Endothelial cell of umbilical vein (primary cell): ENCODE measurements at regions of chr2 and their contacts with region 1.

Region 1: GRCh38 chr2:230712443-230713330 is at the start of gene CAB39:
- DNase-seq: peak; percentile 90
- H3K4me3 ChIP-seq: peak within 1 kb of the TSS; percentile 75 to 94 (median 91)
- H3K27ac ChIP-seq: peak within 1 kb of the TSS; percentile 84
- H3K4me1 ChIP-seq: peaks cover 20% of the 10 kb centered on the region
- H3K27me3 ChIP-seq: peaks cover 0 to 2% of the 10 kb centered on the region in 2 experiments
- CTCF ChIP-seq: peak; percentile 81 to 93
- POLR2A ChIP-seq: peak; percentile 71
- total RNA-seq, gene CAB39: 53.7 and 57.3 TPM in 2 replicates

Region 2: DNA sequence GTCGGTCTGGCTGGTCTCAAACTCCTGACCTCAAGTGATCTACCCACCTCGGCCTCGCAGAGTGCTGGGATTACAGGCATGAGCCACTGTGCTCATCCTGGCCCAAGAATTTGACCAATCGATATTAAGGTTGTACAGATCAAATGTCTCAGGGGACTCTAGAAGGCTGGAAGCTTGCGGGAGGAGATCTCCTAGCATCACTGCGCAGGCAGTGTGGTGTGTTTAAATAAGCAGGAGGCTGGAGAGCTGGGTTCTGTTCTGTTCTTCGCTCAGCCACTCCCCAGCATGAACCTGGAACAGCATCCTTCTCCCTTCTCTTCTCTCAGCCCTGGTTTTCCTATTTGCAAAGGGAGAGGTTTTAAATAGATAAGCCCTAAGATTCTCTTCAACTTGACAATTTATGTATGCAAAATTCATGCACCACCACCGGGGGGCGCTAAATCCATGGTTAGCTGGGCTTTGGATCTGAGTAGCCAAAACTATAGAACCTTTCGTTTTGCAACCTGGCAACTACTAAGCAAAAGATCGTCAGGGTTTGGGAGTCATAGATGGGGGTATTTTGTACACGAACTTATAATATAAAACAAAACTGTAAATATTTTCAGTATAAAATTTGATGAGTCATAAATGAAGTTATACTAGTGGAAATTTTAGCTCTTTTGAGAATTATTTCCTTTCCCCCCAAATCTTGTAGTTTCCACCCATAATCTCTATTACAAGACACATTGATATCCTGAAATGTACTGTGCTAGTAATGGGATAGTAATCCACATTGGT is 704.6 kb before region 1 on chr2:
- CTCF ChIA-PET with region 1: no interaction called
- POLR2A ChIA-PET with region 1: no interaction called
- dilution Hi-C with region 1: no loop called
- intact Hi-C with region 1: loop called (anchors 5 kb)
- DNase-seq: peak; percentile 78
- H3K4me3 ChIP-seq: peak overlapping the region in 1 of 3 experiments; percentile 20
- H3K27ac ChIP-seq: no peak overlapping the region
- H3K4me1 ChIP-seq: peaks cover 7% of the 10 kb centered on the region
- H3K27me3 ChIP-seq: no peaks in the 10 kb centered on the region
- CTCF ChIP-seq: peak; percentile 67 to 78
- POLR2A ChIP-seq: no peak

Region 3: DNA sequence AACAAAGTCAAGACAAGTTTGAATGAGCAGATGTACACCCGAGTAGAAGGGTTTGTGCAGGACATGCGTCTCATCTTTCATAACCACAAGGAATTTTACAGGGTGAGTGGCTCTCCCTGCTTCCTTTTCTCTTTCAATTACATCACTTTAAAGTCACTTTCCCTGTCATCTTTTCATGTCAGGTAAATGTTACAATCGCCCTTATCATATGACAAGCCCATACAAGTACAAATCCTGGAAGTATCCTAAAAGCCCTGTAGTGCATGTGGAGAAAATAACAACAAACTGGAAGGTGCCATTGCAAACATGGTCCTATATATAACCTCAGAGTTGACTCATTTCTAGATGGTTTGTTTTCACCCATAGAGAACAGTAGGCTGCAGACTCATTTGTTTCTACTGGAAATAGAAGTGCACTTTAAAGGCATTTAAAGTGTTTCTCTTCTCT is 170.7 kb before region 1 on chr2:
- CTCF ChIA-PET with region 1: no interaction called
- POLR2A ChIA-PET with region 1: no interaction called
- dilution Hi-C with region 1: no loop called
- intact Hi-C with region 1: no loop called
- DNase-seq: no peak
- H3K4me3 ChIP-seq: no peak overlapping the region
- H3K27ac ChIP-seq: no peak overlapping the region
- H3K4me1 ChIP-seq: no peaks in the 10 kb centered on the region
- H3K27me3 ChIP-seq: no peaks in the 10 kb centered on the region
- CTCF ChIP-seq: no peak
- POLR2A ChIP-seq: no peak

Region 4: DNA sequence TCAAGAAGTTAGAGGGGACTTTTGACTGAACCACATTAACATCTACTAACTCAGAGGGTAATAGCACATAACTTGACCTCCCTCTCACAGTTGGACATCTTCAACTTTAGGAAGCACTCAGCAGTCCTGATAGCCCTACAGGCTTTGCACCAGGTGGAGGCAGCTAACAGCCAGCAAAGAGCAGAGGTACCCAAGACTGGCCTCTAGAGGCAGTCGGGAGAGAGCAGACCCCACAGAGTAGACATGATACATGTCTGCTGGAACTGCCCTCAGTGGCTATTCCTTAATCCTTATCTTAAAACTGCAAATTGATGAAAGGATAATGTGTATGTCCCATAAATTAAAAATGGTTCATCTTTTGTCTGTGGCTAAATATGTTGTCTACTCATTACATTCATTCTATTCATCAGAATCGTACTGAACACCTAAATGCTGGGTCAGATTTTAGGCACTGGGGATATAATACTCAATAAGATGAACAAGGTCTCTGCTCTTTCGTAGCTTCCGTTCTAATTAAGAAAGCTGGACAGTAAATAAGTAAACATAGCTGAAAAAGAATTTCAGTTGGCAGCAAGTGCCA is 49.7 kb after region 1 on chr2:
- CTCF ChIA-PET with region 1: interaction called, 14 read pairs
- POLR2A ChIA-PET with region 1: no interaction called
- dilution Hi-C with region 1: no loop called
- intact Hi-C with region 1: loop called (anchors 2 kb)
- DNase-seq: peak; percentile 52
- H3K4me3 ChIP-seq: no peak overlapping the region
- H3K27ac ChIP-seq: no peak overlapping the region
- H3K4me1 ChIP-seq: peaks cover 26% of the 10 kb centered on the region
- H3K27me3 ChIP-seq: no peaks in the 10 kb centered on the region
- CTCF ChIP-seq: peak; percentile 40 to 66
- POLR2A ChIP-seq: no peak

Region 5: DNA sequence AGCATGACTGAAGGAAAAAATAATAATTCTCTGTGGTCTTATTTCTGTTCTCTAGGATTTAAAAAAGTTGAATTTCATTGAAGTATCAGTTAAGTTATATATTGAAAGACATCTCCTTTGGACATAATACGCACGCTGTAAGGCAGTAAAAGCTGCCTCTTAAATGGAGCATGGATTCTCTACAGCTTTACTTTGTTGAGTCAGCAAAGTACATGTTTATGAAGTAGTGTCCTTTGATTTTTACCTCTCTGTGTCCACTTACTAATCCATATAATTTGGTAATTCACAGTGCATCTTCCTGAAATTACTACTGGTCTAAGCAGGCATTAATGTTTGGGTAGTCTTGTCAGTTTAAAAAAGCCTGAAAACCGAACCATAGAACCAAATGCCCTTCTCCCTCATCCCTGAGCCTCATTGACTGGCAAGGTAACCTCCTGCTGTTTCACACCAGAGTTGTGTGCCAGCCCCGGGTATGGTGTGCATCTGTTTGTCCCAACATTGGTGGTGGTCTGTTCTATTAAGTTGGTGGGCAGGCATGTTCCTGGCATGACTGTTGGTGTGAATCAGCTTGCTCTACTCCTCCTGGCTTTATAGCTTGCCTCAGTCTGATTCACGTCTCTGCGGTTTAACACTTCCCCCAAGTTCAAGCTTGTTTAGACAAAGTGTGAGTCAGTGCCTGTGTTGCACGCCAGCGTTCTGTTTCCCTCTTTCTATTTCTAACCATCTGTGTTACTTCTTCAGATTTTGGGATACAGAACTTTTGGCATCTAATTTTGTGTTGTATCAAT is 81.1 kb after region 1 on chr2:
- CTCF ChIA-PET with region 1: interaction called, 107 read pairs
- POLR2A ChIA-PET with region 1: interaction called, 6 read pairs
- dilution Hi-C with region 1: no loop called
- intact Hi-C with region 1: loop called (anchors 1 kb)
- DNase-seq: peak; percentile 98
- H3K4me3 ChIP-seq: peak overlapping the region in 1 of 3 experiments; percentile 20
- H3K27ac ChIP-seq: peak overlapping the region; percentile 97
- H3K4me1 ChIP-seq: peaks cover 37% of the 10 kb centered on the region
- H3K27me3 ChIP-seq: no peaks in the 10 kb centered on the region
- CTCF ChIP-seq: no peak
- POLR2A ChIP-seq: peak; percentile 46

Region 6: GRCh38 chr2:230814616-230815015 is 101.9 kb after region 1 on chr2:
- CTCF ChIA-PET with region 1: interaction called, 9 read pairs
- POLR2A ChIA-PET with region 1: no interaction called
- dilution Hi-C with region 1: no loop called
- intact Hi-C with region 1: loop called (anchors 5 kb)
- DNase-seq: peak; percentile 35
- H3K4me3 ChIP-seq: no peak overlapping the region
- H3K27ac ChIP-seq: no peak overlapping the region
- H3K4me1 ChIP-seq: no peaks in the 10 kb centered on the region
- H3K27me3 ChIP-seq: no peaks in the 10 kb centered on the region
- CTCF ChIP-seq: peak; percentile 14 to 16
- POLR2A ChIP-seq: no peak

Region 7: DNA sequence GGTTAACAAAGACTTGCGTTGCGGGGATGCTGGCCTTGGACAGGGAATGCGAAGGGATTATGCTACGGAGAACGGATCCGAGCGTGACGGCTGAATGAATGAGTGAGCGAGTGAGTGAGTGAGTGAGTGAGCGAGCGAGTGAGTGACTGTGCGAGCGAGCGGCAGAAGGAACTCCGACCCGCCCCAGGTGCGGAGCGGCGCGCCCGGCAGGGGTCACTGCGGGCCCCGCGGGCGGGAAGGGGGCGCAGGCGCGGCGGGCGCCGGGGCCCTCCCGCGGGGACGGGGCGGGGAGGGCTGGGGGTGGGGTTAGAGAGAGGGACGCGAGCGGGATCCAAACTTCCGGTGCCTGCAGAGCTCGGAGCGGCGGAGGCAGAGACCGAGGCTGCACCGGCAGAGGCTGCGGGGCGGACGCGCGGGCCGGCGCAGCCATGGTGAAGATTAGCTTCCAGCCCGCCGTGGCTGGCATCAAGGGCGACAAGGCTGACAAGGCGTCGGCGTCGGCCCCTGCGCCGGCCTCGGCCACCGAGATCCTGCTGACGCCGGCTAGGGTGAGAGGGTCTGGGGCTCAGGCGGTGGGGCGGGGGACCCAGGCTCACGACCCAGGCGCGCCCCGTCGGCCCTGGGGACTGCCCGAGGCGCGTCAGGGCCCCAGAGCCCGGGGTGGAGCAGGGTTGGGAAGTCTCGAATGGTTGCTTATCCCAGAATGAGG is 152.1 kb after region 1 on chr2 and contains the start of gene ITM2C:
- CTCF ChIA-PET with region 1: no interaction called
- POLR2A ChIA-PET with region 1: no interaction called
- dilution Hi-C with region 1: no loop called
- intact Hi-C with region 1: no loop called
- DNase-seq: peak; percentile 19
- H3K4me3 ChIP-seq: peak within 1 kb of the TSS in 2 of 3 experiments; percentile 32 to 45
- H3K27ac ChIP-seq: no peak within 1 kb of the TSS
- H3K4me1 ChIP-seq: peaks cover 4% of the 10 kb centered on the region
- H3K27me3 ChIP-seq: peaks cover 21 to 39% of the 10 kb centered on the region in 2 experiments
- CTCF ChIP-seq: peak; percentile 19 to 24
- POLR2A ChIP-seq: no peak
- total RNA-seq, gene ITM2C: 8.4 and 12.0 TPM in 2 replicates